Activated CD4-positive, alpha-beta memory T cell treated with anti-CD3 and anti-CD28 coated beads, Interleukin-2, amount 10 ng/mL, durations not matched to agents 7 days and 5 days (primary cell): ENCODE measurements at regions of chr9 and their contacts with region 1.

Region 1: DNA sequence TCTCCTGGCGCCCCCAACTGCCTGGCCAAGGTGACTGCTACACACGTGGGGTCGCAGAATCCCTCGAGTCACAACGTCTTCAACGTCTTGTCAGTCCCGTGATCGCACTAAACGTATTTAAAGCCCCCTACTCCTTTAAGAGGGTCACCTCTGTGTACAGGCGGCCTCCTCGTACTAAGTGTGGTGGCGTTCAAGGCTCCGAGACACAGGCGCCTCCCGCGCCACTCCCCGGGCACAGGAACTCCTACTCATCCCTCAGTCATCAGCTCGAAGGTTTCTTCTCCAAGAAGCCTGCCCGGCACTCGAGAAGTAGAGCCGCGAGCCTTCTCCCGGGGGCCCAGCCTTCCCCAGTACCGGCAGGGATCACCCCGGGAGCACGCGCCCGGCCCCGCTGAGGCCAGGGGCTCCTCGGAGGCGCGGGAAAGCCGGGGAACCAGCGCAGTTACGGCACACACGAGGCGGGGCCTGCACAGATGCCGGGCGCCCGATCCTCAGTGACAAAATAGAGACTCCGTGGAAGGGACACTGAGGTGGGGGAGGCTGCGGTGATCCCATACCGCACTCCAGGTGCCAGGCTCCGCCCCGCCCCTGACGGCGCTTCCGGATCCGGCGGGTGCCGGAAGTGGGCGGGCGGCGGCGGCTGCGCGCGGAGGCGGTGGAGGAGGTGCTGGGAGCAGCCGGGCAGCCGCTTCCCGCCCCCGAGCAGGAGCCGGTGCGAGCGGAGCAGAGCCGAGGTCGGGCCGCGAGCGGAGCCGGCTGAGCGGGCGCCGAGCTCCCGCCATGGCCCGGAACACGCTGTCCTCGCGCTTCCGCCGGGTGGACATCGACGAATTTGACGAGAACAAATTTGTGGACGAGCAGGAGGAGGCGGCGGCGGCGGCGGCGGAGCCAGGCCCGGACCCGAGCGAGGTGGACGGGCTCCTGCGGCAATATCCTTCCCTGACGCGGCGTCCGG is 6.9 kb downstream of the ARPC5L start:
- DNase-seq: peak; percentile 90
- H3K4me3 Mint-ChIP-seq: peak overlapping the region; percentile 88
- H3K27ac Mint-ChIP-seq: peak overlapping the region; percentile 100
- H3K4me1 Mint-ChIP-seq: peaks cover 54% of the 10 kb centered on the region
- H3K27me3 Mint-ChIP-seq: no peaks in the 10 kb centered on the region

Region 2: DNA sequence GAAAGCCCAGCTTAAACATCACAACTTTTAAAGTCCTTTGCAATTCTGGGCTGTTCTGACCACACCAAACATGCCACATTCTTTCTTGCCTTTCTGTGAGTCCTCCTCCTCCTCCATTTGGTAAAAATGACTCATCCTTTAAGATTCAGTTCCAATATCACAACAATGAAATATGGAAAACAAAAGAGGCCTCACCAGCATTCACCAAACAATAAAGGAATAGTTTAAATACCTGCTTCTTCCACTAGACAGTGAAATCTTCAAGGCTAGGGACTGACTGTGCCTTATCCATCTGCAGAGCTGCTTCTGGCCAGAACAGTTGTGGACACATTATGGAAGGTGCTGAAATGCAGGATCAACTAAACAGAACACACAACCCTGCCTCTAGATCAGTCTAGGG is 133.7 kb before region 1 on chr9:
- CTCF ChIA-PET with region 1: no interaction called
- POLR2A ChIA-PET with region 1: no interaction called
- DNase-seq: no peak
- H3K4me3 Mint-ChIP-seq: no peak overlapping the region
- H3K27ac Mint-ChIP-seq: no peak overlapping the region
- H3K4me1 Mint-ChIP-seq: peaks cover 8% of the 10 kb centered on the region
- H3K27me3 Mint-ChIP-seq: peaks cover 3% of the 10 kb centered on the region

Region 3: DNA sequence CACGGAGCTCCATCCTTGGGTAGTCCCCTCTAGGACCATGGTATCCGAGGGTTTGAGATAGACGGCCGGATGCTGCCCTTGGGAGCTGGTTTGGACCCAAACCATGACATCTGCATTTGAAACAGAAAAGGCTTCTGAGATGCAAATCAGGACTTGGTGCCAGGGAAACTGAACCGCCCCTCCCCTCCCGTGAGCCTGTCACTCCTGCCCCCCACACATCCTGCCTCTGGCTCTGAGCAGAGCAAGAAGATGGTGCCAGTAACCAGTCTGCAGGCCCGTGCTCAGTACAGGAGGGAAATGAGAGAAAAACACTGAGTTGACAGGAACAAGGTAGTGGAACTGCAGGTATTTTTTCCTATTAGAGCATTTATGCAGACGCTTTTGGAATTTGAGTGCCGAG is 11.7 kb after region 1 on chr9:
- CTCF ChIA-PET with region 1: no interaction called
- POLR2A ChIA-PET with region 1: interaction called, 210 read pairs
- DNase-seq: no peak
- H3K4me3 Mint-ChIP-seq: no peak overlapping the region
- H3K27ac Mint-ChIP-seq: no peak overlapping the region
- H3K4me1 Mint-ChIP-seq: peaks cover 3% of the 10 kb centered on the region
- H3K27me3 Mint-ChIP-seq: no peaks in the 10 kb centered on the region